Activated CD4-positive, alpha-beta T cell treated with anti-CD3 and anti-CD28 coated beads, Interleukin-2, amount 10 ng/mL, durations not matched to agents 7 days and 5 days (primary cell): ENCODE measurements at regions of chr14 and their contacts with region 1.

Region 1: GRCh38 chr14:100239840-100240724 is 1.1 kb downstream of the YY1 start:
- DNase-seq: peak; percentile 84
- H3K4me3 Mint-ChIP-seq: peak overlapping the region; percentile 94
- H3K27ac Mint-ChIP-seq: peak overlapping the region; percentile 92
- H3K4me1 Mint-ChIP-seq: peaks cover 52% of the 10 kb centered on the region
- H3K27me3 Mint-ChIP-seq: no peaks in the 10 kb centered on the region

Region 2: DNA sequence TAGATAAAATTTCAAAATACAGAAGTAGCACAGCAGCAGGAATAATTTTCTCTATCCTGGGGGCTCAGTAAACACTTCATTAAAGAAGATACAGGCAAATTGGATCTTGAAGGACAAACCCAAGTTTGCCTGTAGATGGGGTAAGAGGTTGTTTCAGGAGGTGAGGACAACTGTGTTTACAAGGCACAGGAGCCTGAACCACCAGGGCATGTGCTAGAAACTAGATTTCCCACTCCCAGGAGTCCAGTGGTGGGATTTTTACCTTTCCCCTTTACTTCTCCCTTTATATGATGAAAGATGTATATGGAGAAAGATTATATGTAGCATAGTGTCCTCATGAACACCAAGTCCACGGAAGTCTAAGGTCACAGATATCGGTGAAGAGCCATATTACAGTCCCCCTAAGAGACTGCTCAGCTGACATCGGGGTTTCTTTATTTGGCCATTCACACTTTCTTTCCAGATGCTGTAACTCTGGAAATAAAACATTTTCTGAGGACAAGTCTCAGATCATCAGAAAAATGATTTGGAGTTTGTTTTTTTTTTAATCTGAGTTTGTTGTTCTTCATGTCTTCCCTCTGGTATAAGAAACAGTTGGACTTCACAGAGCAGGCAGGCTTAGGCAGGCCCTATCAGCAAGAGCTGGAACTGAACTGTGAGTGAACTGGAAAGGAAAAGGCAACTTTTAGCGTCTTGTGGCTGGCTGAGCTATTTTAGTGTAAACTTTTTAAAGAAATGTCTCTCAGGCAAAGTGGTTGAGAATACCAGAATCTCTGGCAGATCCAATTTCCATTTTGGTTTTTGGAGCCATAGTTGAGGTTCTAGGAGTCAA is 182.9 kb before region 1 on chr14:
- CTCF ChIA-PET with region 1: no interaction called
- POLR2A ChIA-PET with region 1: no interaction called
- DNase-seq: peak; percentile 63
- H3K4me3 Mint-ChIP-seq: no peak overlapping the region
- H3K27ac Mint-ChIP-seq: peak overlapping the region; percentile 87
- H3K4me1 Mint-ChIP-seq: peaks cover 68% of the 10 kb centered on the region
- H3K27me3 Mint-ChIP-seq: no peaks in the 10 kb centered on the region

Region 3: DNA sequence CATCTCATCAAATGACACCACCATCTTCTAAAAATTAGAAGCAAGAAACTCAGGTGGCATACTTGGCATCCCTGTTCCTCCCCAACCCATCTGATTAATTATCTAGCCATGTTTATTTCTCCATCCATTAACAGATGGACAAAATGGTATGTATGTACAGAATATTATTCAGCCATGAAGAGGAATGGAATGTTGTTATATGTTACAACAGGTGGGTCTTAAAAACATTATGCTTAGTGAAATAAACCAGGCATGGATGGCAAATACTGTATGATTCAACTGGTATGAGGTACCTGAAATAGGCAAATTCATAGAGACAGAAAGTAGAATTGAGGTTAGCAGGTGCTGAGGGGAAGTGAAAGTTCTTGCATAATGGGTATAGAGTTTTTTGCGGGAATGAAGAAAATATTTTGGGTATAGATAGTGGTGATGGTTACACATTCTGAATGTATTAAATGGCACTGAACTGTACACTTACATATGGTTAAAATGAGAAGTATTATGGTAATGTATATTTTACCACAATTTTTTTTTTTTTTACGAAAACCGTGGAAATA is 16.3 kb after region 1 on chr14:
- CTCF ChIA-PET with region 1: interaction called, 11 read pairs
- POLR2A ChIA-PET with region 1: no interaction called
- DNase-seq: no peak
- H3K4me3 Mint-ChIP-seq: no peak overlapping the region
- H3K27ac Mint-ChIP-seq: no peak overlapping the region
- H3K4me1 Mint-ChIP-seq: peaks cover 72% of the 10 kb centered on the region
- H3K27me3 Mint-ChIP-seq: no peaks in the 10 kb centered on the region